Right cardiac atrium (tissue), 5 donors: ENCODE measurements at regions of chr9 and their contacts with region 1.

Region 1: DNA sequence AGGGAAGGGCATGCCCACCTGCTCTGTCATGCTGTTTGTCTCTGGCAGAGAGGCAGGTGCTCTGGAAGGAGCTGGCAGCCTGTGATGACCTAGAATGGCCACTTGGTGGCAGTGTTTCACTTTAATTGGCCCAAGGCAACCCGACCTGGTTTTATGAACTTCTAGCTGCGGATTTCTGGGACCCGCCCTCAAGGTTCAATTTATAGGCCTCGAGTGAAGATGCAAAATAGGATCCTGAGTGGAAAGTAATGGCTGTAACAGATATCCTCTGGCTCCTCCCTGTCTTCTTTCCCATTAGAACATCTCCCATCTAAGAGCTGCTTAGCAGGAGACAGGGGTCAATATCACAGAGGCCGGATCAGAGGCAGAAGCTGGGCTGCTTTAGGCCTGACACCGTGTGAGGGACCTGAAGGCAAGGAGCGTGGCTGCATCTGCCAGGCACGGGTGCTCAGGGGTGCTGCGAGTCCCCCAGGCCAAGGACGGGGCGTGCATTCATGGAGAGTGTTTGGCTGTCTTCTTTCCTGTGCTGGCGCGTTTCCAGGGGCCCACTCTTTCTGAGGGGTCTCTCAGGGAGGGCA is 56.7 kb upstream of the SLC28A3 start:
- DNase-seq: peak; percentile 34 to 76 (median 68)
- ATAC-seq: peak; percentile 78 to 81
- H3K4me3 ChIP-seq: no peak overlapping the region
- H3K27ac ChIP-seq: no peak overlapping the region
- H3K4me1 ChIP-seq: no peaks in the 10 kb centered on the region
- H3K27me3 ChIP-seq: no peaks in the 10 kb centered on the region

Region 2: GRCh38 chr9:84331119-84331809 is 66.0 kb before region 1 on chr9:
- intact Hi-C with region 1: no loop called
- DNase-seq: no peak
- ATAC-seq: peak in 1 of 2 donors; percentile 52
- H3K4me3 ChIP-seq: no peak overlapping the region
- H3K27ac ChIP-seq: no peak overlapping the region
- H3K4me1 ChIP-seq: peaks cover 2% of the 10 kb centered on the region
- H3K27me3 ChIP-seq: no peaks in the 10 kb centered on the region

Region 3: DNA sequence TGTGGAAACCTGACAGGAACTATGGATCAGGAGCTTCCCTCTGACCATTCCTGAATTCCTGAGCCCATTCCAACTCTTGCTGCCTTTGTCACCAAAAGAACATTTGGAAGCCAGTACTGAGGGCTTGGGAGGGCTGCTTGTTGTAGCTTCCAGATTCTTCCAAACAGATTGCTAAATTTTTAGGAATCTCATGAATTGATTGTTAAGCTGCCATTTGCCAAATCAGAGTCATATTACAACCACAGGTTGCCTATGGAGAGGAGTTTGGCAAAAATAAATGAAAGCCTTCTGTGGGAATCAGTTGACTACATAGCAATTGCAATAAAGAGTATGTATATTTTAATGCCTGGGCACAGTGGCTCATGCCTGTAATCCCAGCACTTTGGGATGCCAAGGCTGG is 17.5 kb before region 1 on chr9:
- intact Hi-C with region 1: no loop called
- DNase-seq: no peak
- ATAC-seq: no peak
- H3K4me3 ChIP-seq: no peak overlapping the region
- H3K27ac ChIP-seq: no peak overlapping the region
- H3K4me1 ChIP-seq: no peaks in the 10 kb centered on the region
- H3K27me3 ChIP-seq: no peaks in the 10 kb centered on the region

Region 4: DNA sequence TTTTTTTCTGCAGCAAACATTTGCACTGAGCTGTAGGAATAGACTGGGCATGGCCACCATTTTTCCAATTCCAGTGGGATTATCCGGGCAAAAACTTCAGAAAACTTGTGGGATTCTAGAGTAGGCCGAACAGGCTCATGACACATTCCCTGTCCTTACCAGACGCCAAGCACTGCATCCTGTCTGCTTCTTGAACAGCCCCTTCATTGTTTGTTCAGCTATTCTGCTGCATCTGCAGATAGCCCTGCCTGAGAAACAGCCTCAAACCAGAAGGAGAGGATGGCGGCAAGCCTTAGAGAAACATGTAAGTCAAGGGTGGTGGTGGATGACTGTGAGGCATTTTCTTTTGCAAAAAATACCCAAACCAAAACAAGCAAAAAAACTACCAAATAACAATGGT is 160.5 kb after region 1 on chr9:
- intact Hi-C with region 1: no loop called
- DNase-seq: no peak
- ATAC-seq: peak in 1 of 2 donors; percentile 52
- H3K4me3 ChIP-seq: no peak overlapping the region
- H3K27ac ChIP-seq: no peak overlapping the region
- H3K4me1 ChIP-seq: no peaks in the 10 kb centered on the region
- H3K27me3 ChIP-seq: no peaks in the 10 kb centered on the region

Region 5: GRCh38 chr9:84953797-84954705 is 556.8 kb after region 1 on chr9:
- intact Hi-C with region 1: loop called in 3 of 4 experiments (anchors 10 kb)
- DNase-seq: peak; percentile 80 to 92 (median 91)
- ATAC-seq: peak; percentile 90 to 93
- H3K4me3 ChIP-seq: no peak overlapping the region
- H3K27ac ChIP-seq: no peak overlapping the region
- H3K4me1 ChIP-seq: peaks cover 2% of the 10 kb centered on the region
- H3K27me3 ChIP-seq: no peaks in the 10 kb centered on the region

Region 6: DNA sequence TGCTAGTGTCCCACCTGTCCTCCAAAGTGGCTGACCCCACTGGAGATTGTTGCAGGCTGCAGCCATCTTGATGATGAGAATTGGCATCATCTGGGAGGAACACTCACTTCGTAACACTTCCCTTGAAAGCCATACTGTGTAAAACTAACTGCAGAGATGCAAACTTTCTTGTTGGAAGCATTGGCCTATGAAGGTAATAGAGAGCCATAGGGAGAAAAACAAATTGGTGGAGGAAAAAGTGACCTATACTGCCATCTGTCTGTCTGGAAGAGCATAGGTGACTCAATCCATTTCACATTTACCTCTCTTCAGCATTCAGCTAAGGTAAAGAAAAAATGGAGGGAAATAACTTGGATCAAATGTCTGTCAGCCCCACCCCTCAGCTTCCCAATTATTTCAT is 745.7 kb after region 1 on chr9:
- intact Hi-C with region 1: loop called in 1 of 4 experiments (anchors 5 kb)
- DNase-seq: no peak
- ATAC-seq: peak in 1 of 2 donors; percentile 26
- H3K4me3 ChIP-seq: no peak overlapping the region
- H3K27ac ChIP-seq: no peak overlapping the region
- H3K4me1 ChIP-seq: no peaks in the 10 kb centered on the region
- H3K27me3 ChIP-seq: no peaks in the 10 kb centered on the region

Region 7: DNA sequence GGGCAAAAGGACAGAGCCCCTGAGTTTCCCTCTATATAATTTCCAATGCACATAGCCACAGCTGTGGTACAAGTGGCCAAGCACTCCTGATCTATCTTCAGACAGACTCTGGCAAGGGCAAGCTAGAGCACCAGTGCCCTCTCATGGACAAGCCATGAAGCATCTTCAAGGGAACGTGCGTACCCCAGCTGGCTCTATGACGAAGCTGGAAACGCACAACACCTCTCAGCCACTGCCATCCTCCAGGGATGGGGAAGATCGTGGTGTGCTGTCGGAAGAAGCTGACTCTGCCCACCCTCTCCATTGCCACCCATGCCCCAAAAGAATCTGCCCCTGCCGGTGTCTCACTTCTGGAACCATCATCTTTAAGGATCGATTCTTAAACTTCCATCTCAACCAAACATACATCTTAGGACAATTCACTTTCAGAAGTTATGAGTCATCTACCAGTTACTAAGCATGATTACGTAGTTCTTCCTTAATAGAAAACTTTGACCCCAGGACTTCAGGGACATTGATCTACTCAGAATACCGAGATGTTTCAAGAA is 861.7 kb after region 1 on chr9:
- intact Hi-C with region 1: loop called in 3 of 4 experiments (anchors 5 to 10 kb)
- DNase-seq: peak; percentile 53 to 74 (median 72)
- ATAC-seq: peak; percentile 83 to 88
- H3K4me3 ChIP-seq: no peak overlapping the region
- H3K27ac ChIP-seq: no peak overlapping the region
- H3K4me1 ChIP-seq: no peaks in the 10 kb centered on the region
- H3K27me3 ChIP-seq: no peaks in the 10 kb centered on the region

Region 8: DNA sequence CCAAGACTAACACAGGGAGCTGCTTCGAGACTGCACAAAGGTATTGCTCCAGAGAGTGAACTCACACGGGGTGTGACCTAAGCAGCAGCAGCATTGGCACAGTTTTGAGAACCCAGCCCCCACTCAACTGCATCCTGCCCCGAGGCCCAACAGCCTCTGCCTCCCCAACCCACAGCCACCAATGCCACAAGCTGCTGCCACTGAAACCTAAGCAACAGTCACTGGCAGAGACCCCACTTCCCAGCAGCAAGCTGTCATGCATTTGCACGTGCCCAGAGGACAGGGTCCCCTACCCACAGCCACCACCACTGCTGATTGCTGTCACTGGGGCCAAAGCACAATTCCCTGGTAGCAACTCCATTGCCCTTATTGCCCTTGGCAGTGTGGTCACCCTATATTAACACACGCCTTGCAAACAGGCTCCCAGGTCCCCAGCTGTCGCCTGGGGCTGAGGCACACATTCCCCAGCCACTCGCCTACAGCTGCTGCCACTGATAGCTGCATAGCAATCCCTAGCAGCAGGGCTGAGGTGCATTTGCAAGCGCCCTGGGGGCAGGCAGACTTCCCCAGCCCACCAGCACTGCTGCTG is 1203.5 kb after region 1 on chr9:
- intact Hi-C with region 1: loop called in 2 of 4 experiments (anchors 10 kb)
- DNase-seq: peak in 2 of 3 donors; percentile 20 to 51
- ATAC-seq: peak; percentile 20 to 50
- H3K4me3 ChIP-seq: no peak overlapping the region
- H3K27ac ChIP-seq: peak overlapping the region; percentile 1
- H3K4me1 ChIP-seq: no peaks in the 10 kb centered on the region
- H3K27me3 ChIP-seq: no peaks in the 10 kb centered on the region

Region 9: DNA sequence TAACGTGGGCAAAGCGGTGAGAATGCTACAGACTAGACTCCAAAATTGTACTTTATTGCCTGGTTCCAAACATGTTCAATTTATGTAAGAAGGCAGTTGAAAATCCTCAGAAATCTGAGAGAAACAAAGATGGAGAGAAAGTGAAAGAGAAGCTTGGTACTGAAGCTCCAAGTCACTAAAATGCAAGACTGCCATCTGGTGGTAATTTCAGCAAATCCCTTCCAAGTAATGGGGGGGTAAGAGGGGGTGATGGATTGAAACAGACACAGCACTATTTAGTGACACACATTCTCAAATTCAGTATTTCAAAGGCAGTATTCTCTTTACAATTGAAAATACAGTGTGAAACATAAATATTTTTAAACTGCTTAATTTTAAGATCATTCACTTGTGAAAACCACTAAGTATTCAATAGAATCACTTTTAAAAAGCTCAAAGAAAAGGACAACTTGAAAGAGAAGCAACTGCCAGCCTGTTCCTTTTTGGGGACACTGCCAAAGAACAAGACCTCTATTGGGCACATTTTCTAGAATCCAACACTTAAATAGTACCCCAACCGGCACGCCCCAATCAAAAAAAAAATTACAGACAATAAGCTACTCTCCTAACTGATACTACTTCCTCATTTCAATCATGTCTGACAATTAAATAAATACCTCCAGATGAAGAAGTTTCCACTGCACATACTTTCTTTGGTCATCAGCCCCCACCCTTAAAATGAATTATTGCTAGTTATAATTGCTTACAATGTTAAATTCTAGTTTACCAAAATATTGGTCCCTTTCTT is 1213.0 kb after region 1 on chr9:
- intact Hi-C with region 1: loop called in 3 of 4 experiments (anchors 5 to 10 kb)
- DNase-seq: no peak
- ATAC-seq: peak; percentile 70 to 79
- H3K4me3 ChIP-seq: peak overlapping the region; percentile 17
- H3K27ac ChIP-seq: no peak overlapping the region
- H3K4me1 ChIP-seq: no peaks in the 10 kb centered on the region
- H3K27me3 ChIP-seq: no peaks in the 10 kb centered on the region